CD8-positive, alpha-beta T cell (primary cell): ENCODE measurements at regions of chrX and their contacts with region 1.

Region 1: DNA sequence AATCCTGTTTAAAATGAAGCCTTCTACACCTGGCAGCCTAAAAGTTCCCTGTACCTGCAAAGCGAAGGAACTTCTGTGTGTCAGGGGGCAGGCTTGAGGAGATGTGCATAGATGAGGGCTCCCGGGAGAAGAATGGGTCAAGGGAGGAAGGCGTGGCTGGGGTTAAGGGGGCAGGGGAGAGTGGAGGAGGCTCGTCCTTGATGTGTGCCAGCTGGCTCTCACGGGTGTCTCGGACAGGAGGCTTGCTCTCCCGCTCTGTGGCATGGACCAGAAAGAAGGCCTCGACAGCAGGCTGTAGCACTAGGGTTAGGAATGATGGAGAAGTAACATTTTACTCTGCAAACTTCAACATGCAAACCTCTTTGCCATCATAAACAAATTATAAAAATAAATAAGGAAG is 104.6 kb upstream of the HSD17B10 start:
- DNase-seq: no peak
- ATAC-seq: no peak
- H3K4me3 ChIP-seq: no peak overlapping the region
- H3K4me3 Mint-ChIP-seq: no peak overlapping the region
- H3K27ac ChIP-seq: no peak overlapping the region
- H3K27ac Mint-ChIP-seq: no peak overlapping the region
- H3K4me1 ChIP-seq: no peaks in the 10 kb centered on the region
- H3K4me1 Mint-ChIP-seq: no peaks in the 10 kb centered on the region
- H3K27me3 ChIP-seq: no peaks in the 10 kb centered on the region
- H3K27me3 Mint-ChIP-seq: no peaks in the 10 kb centered on the region
- CTCF ChIP-seq: no peak

Region 2: GRCh38 chrX:53395601-53396298 is 143.0 kb before region 1 on chrX:
- CTCF ChIA-PET with region 1: no interaction called
- POLR2A ChIA-PET with region 1: no interaction called
- intact Hi-C with region 1: loop called in 1 of 2 experiments (anchors 10 kb)
- DNase-seq: no peak
- ATAC-seq: no peak
- H3K4me3 ChIP-seq: no peak overlapping the region
- H3K4me3 Mint-ChIP-seq: no peak overlapping the region
- H3K27ac ChIP-seq: no peak overlapping the region
- H3K27ac Mint-ChIP-seq: no peak overlapping the region
- H3K4me1 ChIP-seq: no peaks in the 10 kb centered on the region
- H3K4me1 Mint-ChIP-seq: no peaks in the 10 kb centered on the region
- H3K27me3 ChIP-seq: no peaks in the 10 kb centered on the region
- H3K27me3 Mint-ChIP-seq: no peaks in the 10 kb centered on the region
- CTCF ChIP-seq: no peak

Region 3: DNA sequence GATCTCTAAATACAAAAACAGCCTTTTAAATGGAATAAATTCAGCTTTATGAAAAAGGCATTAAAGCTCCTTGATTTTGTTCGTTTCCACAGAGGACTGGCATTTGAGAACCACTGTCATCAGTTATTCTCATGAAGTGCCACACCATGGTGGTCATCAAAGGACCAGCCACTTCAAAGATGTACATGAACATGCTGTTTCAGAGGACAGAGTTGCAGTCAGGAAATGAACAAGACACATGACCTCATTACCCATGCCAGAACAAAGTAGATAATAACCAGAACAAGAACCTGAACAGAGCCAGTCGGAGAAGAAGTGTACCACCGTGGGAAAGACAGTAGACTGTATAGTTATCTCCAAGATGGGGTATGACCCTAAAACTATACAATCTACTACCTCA is 18.1 kb after region 1 on chrX:
- CTCF ChIA-PET with region 1: no interaction called
- POLR2A ChIA-PET with region 1: no interaction called
- intact Hi-C with region 1: loop called in 1 of 2 experiments (anchors 2 kb)
- DNase-seq: no peak
- ATAC-seq: no peak
- H3K4me3 ChIP-seq: no peak overlapping the region
- H3K4me3 Mint-ChIP-seq: no peak overlapping the region
- H3K27ac ChIP-seq: no peak overlapping the region
- H3K27ac Mint-ChIP-seq: no peak overlapping the region
- H3K4me1 ChIP-seq: no peaks in the 10 kb centered on the region
- H3K4me1 Mint-ChIP-seq: peaks cover 4% of the 10 kb centered on the region
- H3K27me3 ChIP-seq: no peaks in the 10 kb centered on the region
- H3K27me3 Mint-ChIP-seq: no peaks in the 10 kb centered on the region
- CTCF ChIP-seq: no peak